ENCODE measurements at regions of chr13 and their contacts with region 1.

Region 1: GRCh38 chr13:60335531-60335930 is 61.5 kb upstream of the TDRD3 start:
- DNase-seq: no peak
- H3K4me3 ChIP-seq: no peak overlapping the region
- H3K27ac ChIP-seq: no peak overlapping the region
- H3K4me1 ChIP-seq: no peaks in the 10 kb centered on the region
- H3K27me3 ChIP-seq: no peaks in the 10 kb centered on the region
- CTCF ChIP-seq: peak; percentile 85

Region 2: GRCh38 chr13:59391696-59392095 is 943.8 kb before region 1 on chr13:
- CTCF ChIA-PET with region 1: no interaction called
- POLR2A ChIA-PET with region 1: no interaction called
- intact Hi-C with region 1: loop called (anchors 1 kb)
- DNase-seq: peak in 1 of 2 experiments; percentile 14
- H3K4me3 ChIP-seq: no peak overlapping the region
- H3K27ac ChIP-seq: no peak overlapping the region
- H3K4me1 ChIP-seq: no peaks in the 10 kb centered on the region
- H3K27me3 ChIP-seq: no peaks in the 10 kb centered on the region
- CTCF ChIP-seq: peak; percentile 76

Region 3: DNA sequence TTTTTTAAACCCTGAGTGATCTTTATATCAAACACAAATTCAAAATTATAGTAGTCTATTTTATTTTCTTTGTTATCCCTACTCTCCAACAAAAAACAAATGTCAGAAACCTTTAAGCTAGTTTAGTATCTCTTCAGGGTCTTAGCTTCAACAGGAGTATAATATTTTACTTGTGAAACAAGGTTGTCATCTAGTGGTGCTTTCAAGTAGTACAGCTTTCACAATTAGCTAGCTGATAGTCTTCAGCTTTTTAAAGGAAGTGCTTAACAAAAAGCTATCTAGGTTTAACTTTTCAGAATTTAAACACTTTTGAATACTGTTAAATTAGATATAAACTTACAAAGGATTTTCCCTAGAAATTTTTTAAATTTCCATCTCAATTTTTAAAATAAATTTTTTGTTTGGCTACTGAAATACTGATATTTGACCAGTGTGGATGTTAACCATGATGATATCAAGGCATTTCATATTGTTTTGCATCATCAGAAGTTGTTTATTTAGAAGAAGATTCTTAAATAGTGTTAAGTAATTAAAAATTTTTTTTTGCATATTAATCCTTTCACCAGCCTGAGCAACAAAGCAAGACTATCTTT is 95.7 kb after region 1 on chr13:
- CTCF ChIA-PET with region 1: no interaction called
- POLR2A ChIA-PET with region 1: no interaction called
- intact Hi-C with region 1: loop called (anchors 2 kb)
- DNase-seq: peak in 1 of 2 experiments; percentile 63
- H3K4me3 ChIP-seq: no peak overlapping the region
- H3K27ac ChIP-seq: no peak overlapping the region
- H3K4me1 ChIP-seq: no peaks in the 10 kb centered on the region
- H3K27me3 ChIP-seq: no peaks in the 10 kb centered on the region
- CTCF ChIP-seq: peak; percentile 89

Measured in PC-9 (cell line).